ENCODE measurements at regions of chr10 and their contacts with region 1.

Region 1: DNA sequence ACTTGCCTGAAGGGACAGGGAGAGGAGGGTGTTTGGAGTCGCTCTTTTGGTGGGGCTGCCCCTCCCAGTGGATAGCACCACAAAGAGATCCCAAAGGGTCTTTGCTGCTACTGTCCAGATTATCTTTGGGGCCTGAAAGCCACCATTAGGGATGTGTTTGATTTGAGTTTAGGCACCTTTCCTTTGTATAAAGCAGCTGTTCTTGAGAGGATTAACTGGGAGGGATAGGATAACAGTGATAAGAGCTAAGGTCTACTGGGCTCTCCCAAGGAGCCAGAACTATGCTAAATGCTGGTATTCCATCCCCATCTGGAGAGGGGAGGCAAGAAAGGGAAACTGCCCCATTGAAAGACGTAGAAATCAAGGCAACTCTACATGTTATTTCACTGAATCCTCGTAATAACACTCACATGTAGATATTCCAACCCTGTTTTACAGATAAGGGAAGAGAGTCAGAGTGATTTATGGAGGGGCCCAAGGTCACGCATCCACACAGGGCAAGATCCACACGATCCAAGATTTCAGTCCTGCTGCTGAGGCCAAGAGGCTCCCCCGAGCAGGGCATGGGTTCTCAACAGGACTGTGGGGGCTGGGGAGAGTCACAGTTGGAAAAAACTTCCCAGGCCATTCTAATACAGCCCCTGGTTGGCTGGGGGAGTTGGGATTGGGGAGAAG is 11.1 kb upstream of the TCF7L2 start:
- DNase-seq: no peak
- ATAC-seq: no peak
- H3K4me3 Mint-ChIP-seq: no peak overlapping the region
- H3K27ac Mint-ChIP-seq: no peak overlapping the region
- H3K4me1 Mint-ChIP-seq: no peaks in the 10 kb centered on the region
- H3K27me3 Mint-ChIP-seq: peaks cover 4% of the 10 kb centered on the region
- CTCF ChIP-seq: no peak

Region 2: DNA sequence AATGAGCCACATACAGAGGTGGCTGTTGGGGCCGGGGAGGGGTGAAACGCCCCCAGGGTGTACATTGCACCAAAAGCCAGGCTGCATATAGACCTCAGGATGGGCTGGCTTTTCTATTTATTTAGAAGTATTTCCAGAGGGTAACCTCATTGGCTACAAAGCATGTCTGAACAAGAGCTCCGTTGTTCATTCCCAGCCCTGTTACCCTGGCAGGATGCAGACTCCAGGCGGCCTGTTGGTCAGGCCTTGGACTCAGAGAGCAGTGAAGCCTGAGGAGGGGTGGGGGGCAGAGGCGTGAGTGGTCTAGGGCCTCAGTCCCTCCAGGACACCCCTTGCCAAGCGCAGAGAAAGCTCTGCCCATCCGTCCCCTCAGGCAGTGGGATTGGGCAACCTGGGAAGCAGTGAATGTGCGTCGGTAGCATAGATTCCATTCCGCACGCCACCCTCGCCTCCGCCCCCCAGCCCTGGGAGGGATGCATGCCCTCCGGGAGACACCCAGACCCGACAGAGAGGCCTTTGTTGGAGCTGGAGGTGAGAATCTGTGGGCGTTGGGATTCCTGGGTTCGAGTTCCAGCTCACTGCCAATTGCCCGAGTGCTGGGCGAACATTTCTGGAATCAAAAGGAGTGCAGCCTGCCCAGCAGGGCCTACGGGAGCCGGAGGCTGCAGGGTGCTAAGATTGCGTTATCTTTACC is 53.1 kb after region 1 on chr10:
- CTCF ChIA-PET with region 1: no interaction called
- POLR2A ChIA-PET with region 1: no interaction called
- intact Hi-C with region 1: loop called (anchors 10 kb)
- DNase-seq: no peak
- ATAC-seq: no peak
- H3K4me3 Mint-ChIP-seq: no peak overlapping the region
- H3K27ac Mint-ChIP-seq: no peak overlapping the region
- H3K4me1 Mint-ChIP-seq: peaks cover 2% of the 10 kb centered on the region
- H3K27me3 Mint-ChIP-seq: peaks cover 37% of the 10 kb centered on the region
- CTCF ChIP-seq: no peak

Measured in activated CD8-positive, alpha-beta T cell treated with anti-CD3 and anti-CD28 coated beads for 36 hours (primary cell).